ENCODE measurements at regions of chr7 and their contacts with region 1.

Region 1: GRCh38 chr7:974820-975681 is at the start of gene COX19:
- DNase-seq: peak; percentile 82 to 92 (median 87)
- ATAC-seq: peak; percentile 98
- H3K4me3 ChIP-seq: peak within 1 kb of the TSS; percentile 95
- H3K4me3 Mint-ChIP-seq: peak within 1 kb of the TSS; percentile 86 to 96 (median 92)
- H3K27ac ChIP-seq: peak within 1 kb of the TSS; percentile 98
- H3K27ac Mint-ChIP-seq: peak within 1 kb of the TSS; percentile 59 to 94 (median 89)
- H3K4me1 ChIP-seq: peaks cover 14 to 20% of the 10 kb centered on the region in 2 donors
- H3K4me1 Mint-ChIP-seq: peaks cover 12 to 36% (median 25%) of the 10 kb centered on the region in 7 donors
- H3K27me3 ChIP-seq: no peaks in the 10 kb centered on the region
- H3K27me3 Mint-ChIP-seq: no peaks in the 10 kb centered on the region
- total RNA-seq, gene COX19: 18.3 to 48.2 (median 46.1) TPM

Region 2: GRCh38 chr7:148932-149855 is 825.9 kb before region 1 on chr7:
- CTCF ChIA-PET with region 1: no interaction called
- POLR2A ChIA-PET with region 1: interaction called, 3 read pairs
- intact Hi-C with region 1: loop called in 1 of 2 experiments (anchors 5 kb)
- DNase-seq: peak; percentile 97 to 99 (median 99)
- ATAC-seq: peak; percentile 97
- H3K4me3 ChIP-seq: peak overlapping the region; percentile 52
- H3K4me3 Mint-ChIP-seq: peak overlapping the region; percentile 80 to 97 (median 91)
- H3K27ac ChIP-seq: peak overlapping the region; percentile 82
- H3K27ac Mint-ChIP-seq: peak overlapping the region; percentile 94 to 100 (median 99)
- H3K4me1 ChIP-seq: peaks cover 18 to 19% of the 10 kb centered on the region in 2 donors
- H3K4me1 Mint-ChIP-seq: peaks cover 9 to 25% (median 20%) of the 10 kb centered on the region in 7 donors
- H3K27me3 ChIP-seq: no peaks in the 10 kb centered on the region
- H3K27me3 Mint-ChIP-seq: peaks cover 0 to 4% (median 0%) of the 10 kb centered on the region in 5 donors

Region 3: GRCh38 chr7:738755-739454 is 236.1 kb before region 1 on chr7:
- CTCF ChIA-PET with region 1: no interaction called
- POLR2A ChIA-PET with region 1: no interaction called
- intact Hi-C with region 1: no loop called
- DNase-seq: no peak
- ATAC-seq: no peak
- H3K4me3 ChIP-seq: no peak overlapping the region
- H3K4me3 Mint-ChIP-seq: no peak overlapping the region
- H3K27ac ChIP-seq: no peak overlapping the region
- H3K27ac Mint-ChIP-seq: peak overlapping the region in 1 of 9 donors; percentile 12
- H3K4me1 ChIP-seq: no peaks in the 10 kb centered on the region
- H3K4me1 Mint-ChIP-seq: peaks cover 5 to 15% (median 13%) of the 10 kb centered on the region in 7 donors
- H3K27me3 ChIP-seq: no peaks in the 10 kb centered on the region
- H3K27me3 Mint-ChIP-seq: no peaks in the 10 kb centered on the region

Region 4: GRCh38 chr7:901381-902154 is 73.5 kb before region 1 on chr7:
- CTCF ChIA-PET with region 1: no interaction called
- POLR2A ChIA-PET with region 1: no interaction called
- intact Hi-C with region 1: loop called in 1 of 2 experiments (anchors 2 kb)
- DNase-seq: peak in 2 of 9 donors; percentile 33 to 68
- ATAC-seq: peak; percentile 79
- H3K4me3 ChIP-seq: no peak overlapping the region
- H3K4me3 Mint-ChIP-seq: no peak overlapping the region
- H3K27ac ChIP-seq: no peak overlapping the region
- H3K27ac Mint-ChIP-seq: no peak overlapping the region
- H3K4me1 ChIP-seq: no peaks in the 10 kb centered on the region
- H3K4me1 Mint-ChIP-seq: peaks cover 0 to 2% (median 0%) of the 10 kb centered on the region in 7 donors
- H3K27me3 ChIP-seq: no peaks in the 10 kb centered on the region
- H3K27me3 Mint-ChIP-seq: peaks cover 0 to 2% (median 0%) of the 10 kb centered on the region in 5 donors

Region 5: GRCh38 chr7:963307-964078 is 11.6 kb before region 1 on chr7:
- CTCF ChIA-PET with region 1: no interaction called
- POLR2A ChIA-PET with region 1: interaction called, 5 read pairs
- intact Hi-C with region 1: loop called in 1 of 2 experiments (anchors 1 kb)
- DNase-seq: peak in 2 of 9 donors; percentile 25 to 35
- ATAC-seq: peak; percentile 12
- H3K4me3 ChIP-seq: no peak overlapping the region
- H3K4me3 Mint-ChIP-seq: peak overlapping the region in 8 of 10 donors; percentile 17 to 79 (median 70)
- H3K27ac ChIP-seq: no peak overlapping the region
- H3K27ac Mint-ChIP-seq: peak overlapping the region in 5 of 9 donors; percentile 37 to 72 (median 49)
- H3K4me1 ChIP-seq: peaks cover 0 to 5% of the 10 kb centered on the region in 2 donors
- H3K4me1 Mint-ChIP-seq: peaks cover 5 to 38% (median 31%) of the 10 kb centered on the region in 7 donors
- H3K27me3 ChIP-seq: no peaks in the 10 kb centered on the region
- H3K27me3 Mint-ChIP-seq: peaks cover 0 to 6% (median 0%) of the 10 kb centered on the region in 5 donors

Region 6: DNA sequence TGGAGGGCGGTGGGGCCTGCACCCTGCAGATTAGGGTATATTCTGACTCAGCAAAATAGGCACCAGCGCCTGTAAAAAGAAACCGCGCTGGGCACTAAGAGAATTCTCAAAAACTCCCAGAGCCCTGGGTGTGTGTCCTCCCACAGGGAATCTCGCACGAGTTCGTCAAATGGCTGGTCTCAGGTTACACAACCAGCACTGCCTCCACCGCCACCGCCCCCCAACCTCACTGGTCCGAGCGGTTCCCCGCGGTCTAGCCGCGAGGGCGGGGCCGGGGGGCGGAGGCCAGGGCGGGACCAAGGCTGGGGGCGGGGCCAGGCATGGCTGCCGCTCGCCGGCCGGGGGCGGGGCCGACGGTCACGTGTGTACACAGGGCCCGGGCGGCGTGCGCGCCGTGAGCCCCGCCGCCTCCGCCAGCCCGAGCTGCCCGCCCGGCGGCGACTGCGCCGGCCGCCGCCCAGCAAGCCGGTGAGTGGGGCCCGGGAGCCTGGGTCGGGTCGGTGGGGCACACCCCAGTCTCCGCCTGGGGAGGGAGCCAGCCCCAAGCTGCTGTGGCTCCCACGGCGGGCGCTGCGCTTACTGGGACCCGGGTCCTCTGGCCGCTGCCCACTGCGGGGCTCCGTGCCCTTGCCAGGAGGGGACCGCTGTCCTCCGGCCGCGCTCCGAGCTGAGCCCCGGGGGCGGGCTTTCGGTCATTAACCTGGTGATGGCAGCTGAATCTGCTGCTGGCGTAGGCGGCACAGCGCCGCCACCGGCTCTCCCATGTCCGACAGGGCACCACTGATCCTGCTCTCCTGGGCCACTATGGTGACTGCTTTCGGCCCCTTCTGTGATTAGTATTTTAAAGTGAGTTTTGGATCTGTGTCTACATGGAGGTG is 69.4 kb after region 1 on chr7 and contains the start of gene GPR146:
- CTCF ChIA-PET with region 1: no interaction called
- POLR2A ChIA-PET with region 1: interaction called, 9 read pairs
- intact Hi-C with region 1: loop called (anchors 1 to 5 kb)
- DNase-seq: peak; percentile 73 to 97 (median 86)
- ATAC-seq: peak; percentile 96
- H3K4me3 ChIP-seq: peak within 1 kb of the TSS; percentile 79
- H3K4me3 Mint-ChIP-seq: peak within 1 kb of the TSS; percentile 88 to 94 (median 91)
- H3K27ac ChIP-seq: peak within 1 kb of the TSS; percentile 83
- H3K27ac Mint-ChIP-seq: peak within 1 kb of the TSS; percentile 62 to 93 (median 85)
- H3K4me1 ChIP-seq: peaks cover 49 to 54% of the 10 kb centered on the region in 2 donors
- H3K4me1 Mint-ChIP-seq: peaks cover 42 to 75% (median 56%) of the 10 kb centered on the region in 7 donors
- H3K27me3 ChIP-seq: no peaks in the 10 kb centered on the region
- H3K27me3 Mint-ChIP-seq: peaks cover 0 to 13% (median 0%) of the 10 kb centered on the region in 5 donors
- total RNA-seq, gene GPR146: 10.1 to 26.5 (median 15.9) TPM

Region 7: GRCh38 chr7:1175967-1176851 is 201.2 kb after region 1 on chr7:
- CTCF ChIA-PET with region 1: interaction called, 3 read pairs
- POLR2A ChIA-PET with region 1: no interaction called
- intact Hi-C with region 1: loop called in 1 of 2 experiments (anchors 1 kb)
- DNase-seq: peak; percentile 38 to 88 (median 64)
- ATAC-seq: peak; percentile 81
- H3K4me3 ChIP-seq: peak overlapping the region; percentile 47
- H3K4me3 Mint-ChIP-seq: peak overlapping the region in 8 of 10 donors; percentile 32 to 78 (median 53)
- H3K27ac ChIP-seq: no peak overlapping the region
- H3K27ac Mint-ChIP-seq: peak overlapping the region in 1 of 9 donors; percentile 42
- H3K4me1 ChIP-seq: peaks cover 6 to 10% of the 10 kb centered on the region in 2 donors
- H3K4me1 Mint-ChIP-seq: peaks cover 7 to 15% (median 11%) of the 10 kb centered on the region in 7 donors
- H3K27me3 ChIP-seq: no peaks in the 10 kb centered on the region
- H3K27me3 Mint-ChIP-seq: peaks cover 11 to 19% (median 18%) of the 10 kb centered on the region in 5 donors